Spleen (tissue), 13 donors: ENCODE measurements at regions of chr2 and their contacts with region 1.

Region 1: DNA sequence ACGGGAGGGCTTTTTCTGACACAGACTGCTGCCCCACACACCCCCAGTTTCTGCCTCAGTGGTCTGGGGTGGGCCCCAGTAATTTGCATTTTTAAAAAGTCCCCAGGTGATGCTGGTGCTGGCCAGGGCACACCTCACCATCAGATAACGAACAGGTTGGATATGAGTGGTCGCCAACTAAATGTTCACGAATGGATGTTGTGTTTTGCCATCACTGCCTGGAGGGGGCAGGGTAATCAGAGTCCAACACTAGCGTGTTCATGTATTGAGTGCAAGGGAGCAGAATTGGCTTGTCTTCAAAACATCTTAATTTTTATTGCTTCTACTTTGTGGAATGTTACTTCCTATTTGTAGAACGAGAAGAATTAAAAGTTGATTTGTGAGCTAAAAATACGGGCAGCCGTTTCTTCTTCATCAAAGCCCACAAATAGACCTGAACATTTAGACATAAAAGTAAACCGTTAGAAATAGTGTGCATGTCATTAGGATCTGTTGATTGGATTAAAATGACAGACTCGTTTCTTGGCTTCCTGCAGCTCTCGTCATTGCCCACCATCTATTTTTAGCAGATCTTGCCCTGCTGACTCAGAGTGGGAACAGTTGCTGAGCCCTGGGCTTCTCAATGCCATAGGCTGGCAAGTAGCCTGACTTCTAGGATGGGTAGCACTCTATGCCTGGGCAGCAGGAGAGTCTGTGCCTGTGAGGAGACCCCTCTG is 45.2 kb downstream of the NCK2 start:
- DNase-seq: no peak
- H3K4me3 ChIP-seq: peak overlapping the region in 2 of 8 donors; percentile 1 to 41
- H3K27ac ChIP-seq: peak overlapping the region; percentile 37 to 93 (median 72)
- H3K4me1 ChIP-seq: peaks cover 46 to 100% (median 95%) of the 10 kb centered on the region in 6 donors
- H3K27me3 ChIP-seq: no peaks in the 10 kb centered on the region
- CTCF ChIP-seq: peak in 3 of 11 experiments; percentile 22 to 36 (median 30)
- POLR2A ChIP-seq: no peak

Region 2: DNA sequence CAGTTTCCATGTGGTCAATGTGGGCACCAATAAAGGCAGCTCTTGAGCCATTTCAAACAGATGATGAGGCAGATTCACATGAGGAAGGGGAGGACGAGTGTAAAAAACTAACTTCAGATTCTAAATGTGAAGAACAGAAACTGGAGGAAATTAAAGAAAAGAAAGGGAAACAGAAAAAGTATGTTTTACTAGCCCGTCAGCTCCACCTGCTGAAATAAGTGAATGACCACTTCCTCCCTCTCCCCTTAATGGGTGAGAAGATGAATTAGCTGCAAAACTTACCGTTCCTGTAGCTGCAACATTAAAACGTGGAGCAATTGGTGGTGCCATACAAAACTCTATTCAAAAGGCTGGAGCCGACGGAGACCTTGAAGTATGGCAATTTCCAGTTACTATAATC is 200.7 kb after region 1 on chr2:
- intact Hi-C with region 1: no loop called
- DNase-seq: no peak
- H3K4me3 ChIP-seq: no peak overlapping the region
- H3K27ac ChIP-seq: no peak overlapping the region
- H3K4me1 ChIP-seq: no peaks in the 10 kb centered on the region
- H3K27me3 ChIP-seq: no peaks in the 10 kb centered on the region
- CTCF ChIP-seq: no peak
- POLR2A ChIP-seq: no peak

Region 3: GRCh38 chr2:106085181-106085940 is 295.5 kb after region 1 on chr2:
- intact Hi-C with region 1: loop called (anchors 10 kb)
- DNase-seq: no peak
- H3K4me3 ChIP-seq: no peak overlapping the region
- H3K27ac ChIP-seq: peak overlapping the region in 6 of 8 donors; percentile 29 to 47 (median 37)
- H3K4me1 ChIP-seq: peaks cover 0 to 15% (median 0%) of the 10 kb centered on the region in 6 donors
- H3K27me3 ChIP-seq: no peaks in the 10 kb centered on the region
- CTCF ChIP-seq: peak in 9 of 11 experiments; percentile 7 to 52 (median 36)
- POLR2A ChIP-seq: no peak